ENCODE measurements at regions of chr7 and their contacts with region 1.

Region 1: GRCh38 chr7:98400542-98401340 is at the start of gene BAIAP2L1:
- DNase-seq: peak; percentile 100
- H3K4me3 ChIP-seq: peak within 1 kb of the TSS; percentile 58 to 63
- H3K27ac ChIP-seq: no peak within 1 kb of the TSS
- H3K4me1 ChIP-seq: peaks cover 4 to 8% of the 10 kb centered on the region in 2 experiments; a peak in 2 of 4 replicates
- H3K27me3 ChIP-seq: no peaks in the 10 kb centered on the region
- CTCF ChIP-seq: no peak
- EP300 ChIP-seq: no peak
- RAD21 ChIP-seq: peak; percentile 74
- polyA plus RNA-seq, gene BAIAP2L1: 8.7 and 8.8 TPM in 2 replicates

Region 2: DNA sequence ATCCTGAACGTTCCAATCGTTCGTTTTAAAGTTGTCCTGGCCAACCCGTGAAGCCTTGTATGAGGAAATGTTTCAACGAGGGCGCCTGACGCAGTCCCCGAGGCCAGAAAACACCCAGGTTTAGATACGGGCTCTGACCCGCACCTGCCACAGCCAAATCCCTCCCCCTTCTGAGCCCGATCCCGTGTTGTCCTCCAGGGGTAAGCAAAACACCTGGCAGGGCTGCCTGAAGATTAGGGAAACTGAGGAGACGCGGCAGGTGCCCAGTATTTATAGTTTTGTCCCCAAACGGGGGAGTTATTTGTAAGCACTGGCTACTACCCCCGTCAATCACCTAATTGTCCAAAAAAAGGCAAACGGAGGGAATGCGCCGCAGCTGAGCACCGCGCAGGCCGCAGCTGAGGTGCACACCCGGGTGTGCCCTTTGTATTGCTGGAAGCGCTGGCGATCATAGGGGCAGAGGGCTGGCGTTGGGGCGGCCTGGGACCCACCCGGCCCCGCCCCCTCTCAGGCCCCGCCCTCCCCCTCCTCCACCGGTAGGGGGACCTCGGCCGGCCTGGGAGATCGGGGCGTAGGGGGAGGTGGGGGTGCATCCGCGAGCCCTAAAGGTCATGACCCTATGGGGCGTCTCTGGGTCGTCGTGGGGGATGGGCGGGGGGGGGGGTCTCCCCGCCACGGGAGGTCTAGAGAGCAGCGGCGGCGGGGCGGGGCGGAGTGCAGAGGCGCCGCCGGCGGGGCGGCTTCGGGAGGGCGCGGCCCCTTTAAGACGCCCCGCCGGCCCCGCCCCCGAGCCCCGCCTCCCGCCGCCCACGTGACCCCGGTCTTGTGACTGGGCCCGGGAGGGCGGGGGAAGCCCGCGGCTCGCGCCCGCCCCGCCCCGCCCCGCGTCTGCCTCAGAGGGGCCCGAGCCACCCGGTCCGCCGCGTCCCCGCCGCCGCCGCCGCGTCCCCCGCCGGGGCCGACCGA is 119.7 kb before region 1 on chr7 and contains the start of gene BRI3:
- CTCF ChIA-PET with region 1: interaction called, 16 read pairs
- POLR2A ChIA-PET with region 1: no interaction called
- DNase-seq: peak; percentile 100
- H3K4me3 ChIP-seq: peak within 1 kb of the TSS; percentile 80 to 92
- H3K27ac ChIP-seq: peak within 1 kb of the TSS; percentile 66 to 82
- H3K4me1 ChIP-seq: peaks cover 29 to 56% of the 10 kb centered on the region in 2 experiments; a peak in 3 of 4 replicates
- H3K27me3 ChIP-seq: no peaks in the 10 kb centered on the region
- CTCF ChIP-seq: no peak
- EP300 ChIP-seq: no peak
- RAD21 ChIP-seq: no peak
- polyA plus RNA-seq, gene BRI3: 108 and 128 TPM in 2 replicates

Region 3: DNA sequence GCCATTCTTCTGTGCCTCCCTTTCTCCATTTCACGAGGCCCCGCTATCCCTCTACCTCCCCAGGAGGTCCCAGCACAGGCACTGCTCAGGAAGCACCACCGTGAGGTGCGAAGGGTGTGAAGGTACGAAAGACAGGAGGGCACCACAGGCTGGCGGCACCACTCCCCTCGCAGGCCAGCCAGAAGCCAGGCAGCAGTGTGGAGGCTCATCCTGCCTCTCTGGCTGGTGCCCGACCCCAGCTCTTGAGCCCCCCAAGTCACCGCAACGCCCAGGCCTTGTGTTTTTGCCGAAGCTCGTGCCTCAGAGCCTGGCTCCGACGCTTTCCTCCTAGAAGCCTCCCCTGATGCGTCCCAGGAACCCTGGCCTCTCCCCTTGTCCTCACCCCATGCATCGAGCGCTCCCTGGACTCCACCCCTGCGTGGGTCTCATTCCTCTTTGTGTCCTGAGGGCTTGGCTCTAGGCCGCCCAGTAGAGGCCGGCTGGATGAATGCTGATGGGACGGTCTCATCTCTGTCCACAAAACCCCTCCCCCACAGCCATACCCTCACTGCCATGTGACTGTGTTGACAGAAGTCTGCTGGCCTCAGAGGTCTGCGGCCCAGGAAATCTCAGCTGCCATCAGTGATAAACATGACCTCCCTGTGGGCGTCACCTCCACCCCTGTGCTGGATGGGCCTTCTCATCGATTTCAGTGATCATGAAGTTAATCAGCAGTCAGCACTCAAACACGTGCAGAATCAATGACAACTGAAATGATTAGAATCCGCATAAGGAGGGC is 100.0 kb before region 1 on chr7:
- CTCF ChIA-PET with region 1: interaction called, 108 read pairs
- POLR2A ChIA-PET with region 1: no interaction called
- DNase-seq: peak; percentile 51
- H3K4me3 ChIP-seq: no peak overlapping the region
- H3K27ac ChIP-seq: no peak overlapping the region
- H3K4me1 ChIP-seq: peaks cover 0 to 1% of the 10 kb centered on the region in 2 experiments; a peak in 1 of 4 replicates
- H3K27me3 ChIP-seq: no peaks in the 10 kb centered on the region
- CTCF ChIP-seq: no peak
- EP300 ChIP-seq: no peak
- RAD21 ChIP-seq: no peak

Region 4: DNA sequence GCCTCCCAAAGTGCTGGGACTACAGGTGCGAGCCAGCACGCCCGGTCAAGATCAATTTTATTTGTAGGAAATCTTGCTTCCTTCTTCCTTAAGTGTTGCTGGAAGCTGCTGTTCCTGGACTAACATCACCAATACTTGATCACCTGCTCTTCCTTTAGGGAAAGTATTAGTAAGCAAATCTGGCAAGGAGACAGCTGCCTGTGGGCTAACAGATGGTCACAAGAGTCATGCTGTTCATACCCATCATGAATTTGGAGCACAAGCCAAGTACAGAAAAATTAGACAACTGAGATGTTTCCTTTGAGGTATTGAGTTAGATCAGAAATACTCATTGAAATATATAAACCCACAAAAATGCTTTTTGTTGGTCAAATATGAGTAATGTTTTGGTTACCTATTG is 27.7 kb before region 1 on chr7:
- CTCF ChIA-PET with region 1: interaction called, 15 read pairs
- POLR2A ChIA-PET with region 1: no interaction called
- DNase-seq: no peak
- H3K4me3 ChIP-seq: no peak overlapping the region
- H3K27ac ChIP-seq: no peak overlapping the region
- H3K4me1 ChIP-seq: no peaks in the 10 kb centered on the region
- H3K27me3 ChIP-seq: no peaks in the 10 kb centered on the region
- CTCF ChIP-seq: no peak
- EP300 ChIP-seq: peak in 1 of 2 experiments; percentile 22; a peak in 1 of 4 replicates
- RAD21 ChIP-seq: no peak

Region 5: GRCh38 chr7:98387544-98388224 is 13.1 kb before region 1 on chr7:
- CTCF ChIA-PET with region 1: interaction called, 17 read pairs
- POLR2A ChIA-PET with region 1: no interaction called
- DNase-seq: no peak
- H3K4me3 ChIP-seq: no peak overlapping the region
- H3K27ac ChIP-seq: no peak overlapping the region
- H3K4me1 ChIP-seq: no peaks in the 10 kb centered on the region
- H3K27me3 ChIP-seq: no peaks in the 10 kb centered on the region
- CTCF ChIP-seq: no peak
- EP300 ChIP-seq: no peak
- RAD21 ChIP-seq: no peak

Region 6: DNA sequence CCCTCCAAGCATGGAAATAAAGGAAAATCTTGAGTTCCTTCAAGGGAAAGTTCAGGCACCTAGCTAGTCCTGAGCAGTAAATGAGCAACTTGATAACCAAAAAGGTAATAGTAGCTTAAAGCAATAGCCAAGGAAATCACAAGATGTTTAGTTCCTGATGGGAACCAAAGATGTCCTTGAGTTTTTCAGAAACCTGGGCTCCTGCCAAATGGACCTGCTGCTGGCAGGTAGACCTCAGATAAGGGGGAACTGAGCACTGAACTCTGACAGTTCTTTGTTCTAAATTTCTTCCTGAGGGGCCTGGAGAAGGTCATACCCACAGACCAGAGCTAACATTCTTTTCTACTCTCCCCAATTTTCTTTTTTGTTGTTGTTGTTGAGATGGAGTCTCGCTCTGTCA is 420.6 kb after region 1 on chr7:
- CTCF ChIA-PET with region 1: no interaction called
- POLR2A ChIA-PET with region 1: no interaction called
- DNase-seq: no peak
- H3K4me3 ChIP-seq: no peak overlapping the region
- H3K27ac ChIP-seq: no peak overlapping the region
- H3K4me1 ChIP-seq: peaks cover 0 to 4% of the 10 kb centered on the region in 2 experiments; a peak in 1 of 4 replicates
- H3K27me3 ChIP-seq: no peaks in the 10 kb centered on the region
- CTCF ChIP-seq: no peak
- EP300 ChIP-seq: no peak
- RAD21 ChIP-seq: no peak